CD4-positive, alpha-beta T cell (primary cell): ENCODE measurements at regions of chr15 and their contacts with region 1.

Region 1: DNA sequence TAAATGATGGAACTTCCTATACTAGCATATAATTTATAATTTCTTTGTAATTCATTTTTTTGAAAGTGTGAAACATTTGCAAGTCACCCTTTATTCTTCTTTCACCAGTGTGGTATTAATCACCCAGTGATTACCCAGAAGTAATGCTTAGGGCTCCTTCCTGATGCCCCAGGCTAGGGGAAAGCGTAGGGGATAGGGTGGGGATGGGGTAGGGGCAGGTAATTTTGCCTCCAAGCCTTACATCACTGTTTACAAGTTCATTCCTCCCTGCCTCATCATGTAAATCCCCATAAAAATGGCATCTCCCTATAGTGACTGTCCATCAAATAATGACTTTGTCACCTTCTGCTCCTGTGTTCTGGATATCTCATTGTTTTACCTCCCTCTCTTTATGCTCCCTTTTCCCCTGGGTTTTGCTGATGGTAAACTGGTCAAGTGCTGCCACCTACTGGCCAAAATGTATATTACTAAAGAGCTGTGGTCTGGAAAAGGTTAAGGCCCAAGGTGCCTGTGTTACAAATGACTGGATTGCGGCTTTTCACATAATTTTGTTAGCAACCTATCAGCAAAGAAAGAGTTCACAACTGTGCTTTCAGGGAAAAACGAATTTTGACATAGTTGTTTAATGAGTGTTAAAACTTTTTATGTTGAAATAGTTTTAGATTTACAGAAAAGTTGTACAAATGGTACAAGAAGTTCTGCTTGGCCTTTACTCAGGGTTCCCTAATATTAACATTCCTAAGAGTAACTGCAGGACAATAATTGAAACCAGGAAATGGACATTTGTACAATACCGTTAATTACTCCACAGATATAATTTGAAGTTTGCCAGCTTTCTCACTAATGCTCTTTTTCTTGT is 54.7 kb downstream of the ONECUT1 start:
- DNase-seq: peak; percentile 37 to 88 (median 58)
- ATAC-seq: peak; percentile 95
- H3K4me3 ChIP-seq: no peak overlapping the region
- H3K4me3 Mint-ChIP-seq: no peak overlapping the region
- H3K27ac ChIP-seq: no peak overlapping the region
- H3K27ac Mint-ChIP-seq: no peak overlapping the region
- H3K4me1 ChIP-seq: peaks cover 3% of the 10 kb centered on the region
- H3K4me1 Mint-ChIP-seq: peaks cover 2% of the 10 kb centered on the region
- H3K27me3 ChIP-seq: no peaks in the 10 kb centered on the region
- H3K27me3 Mint-ChIP-seq: peaks cover 4% of the 10 kb centered on the region
- CTCF ChIP-seq: peak; percentile 89

Region 2: DNA sequence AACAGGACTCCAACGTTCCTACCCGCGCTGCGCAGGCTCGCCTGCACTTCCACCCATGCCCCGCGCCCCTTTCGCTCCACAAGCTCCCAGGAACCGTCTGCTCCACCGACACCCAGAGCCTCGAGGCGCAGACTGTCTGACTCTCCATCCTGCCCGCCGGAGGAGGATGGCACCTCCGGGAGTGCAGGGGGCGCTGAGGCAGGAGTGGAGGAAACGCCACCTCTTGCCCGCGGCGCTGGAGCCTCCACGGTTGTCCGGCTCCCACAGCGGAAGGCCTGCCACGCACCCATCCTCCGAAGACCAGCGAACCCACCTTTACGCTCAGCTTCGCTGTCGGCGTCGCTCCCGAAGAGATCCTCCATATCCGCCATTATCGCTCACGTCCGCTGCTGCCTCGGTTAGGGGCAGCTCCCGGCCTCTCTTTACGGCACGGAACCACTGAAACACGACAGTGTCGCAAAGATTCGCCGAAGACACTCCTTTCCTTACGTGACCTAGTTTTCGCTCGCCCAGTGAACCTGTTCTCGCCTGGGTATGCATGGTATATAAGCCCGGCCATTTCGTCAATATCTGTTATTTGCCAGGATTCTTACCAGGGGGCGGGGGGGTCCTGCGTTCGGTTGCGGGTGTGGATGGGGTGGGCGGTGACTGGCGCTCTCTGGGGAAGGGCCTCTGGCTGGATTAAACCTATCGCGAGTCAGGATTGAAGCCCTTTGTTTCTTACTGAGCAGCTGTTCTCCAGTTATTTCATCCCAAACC is 763.9 kb before region 1 on chr15 and contains the start of gene LEO1:
- CTCF ChIA-PET with region 1: no interaction called
- POLR2A ChIA-PET with region 1: no interaction called
- intact Hi-C with region 1: loop called in 1 of 2 experiments (anchors 10 kb)
- DNase-seq: peak; percentile 73 to 97 (median 83)
- ATAC-seq: peak; percentile 92
- H3K4me3 ChIP-seq: peak within 1 kb of the TSS; percentile 98
- H3K4me3 Mint-ChIP-seq: peak within 1 kb of the TSS; percentile 95
- H3K27ac ChIP-seq: peak within 1 kb of the TSS; percentile 79 to 85
- H3K27ac Mint-ChIP-seq: peak within 1 kb of the TSS; percentile 92
- H3K4me1 ChIP-seq: peaks cover 19% of the 10 kb centered on the region
- H3K4me1 Mint-ChIP-seq: peaks cover 28% of the 10 kb centered on the region
- H3K27me3 ChIP-seq: no peaks in the 10 kb centered on the region
- H3K27me3 Mint-ChIP-seq: no peaks in the 10 kb centered on the region
- CTCF ChIP-seq: peak; percentile 47
- total RNA-seq, gene LEO1: 6.2 to 6.7 TPM

Region 3: DNA sequence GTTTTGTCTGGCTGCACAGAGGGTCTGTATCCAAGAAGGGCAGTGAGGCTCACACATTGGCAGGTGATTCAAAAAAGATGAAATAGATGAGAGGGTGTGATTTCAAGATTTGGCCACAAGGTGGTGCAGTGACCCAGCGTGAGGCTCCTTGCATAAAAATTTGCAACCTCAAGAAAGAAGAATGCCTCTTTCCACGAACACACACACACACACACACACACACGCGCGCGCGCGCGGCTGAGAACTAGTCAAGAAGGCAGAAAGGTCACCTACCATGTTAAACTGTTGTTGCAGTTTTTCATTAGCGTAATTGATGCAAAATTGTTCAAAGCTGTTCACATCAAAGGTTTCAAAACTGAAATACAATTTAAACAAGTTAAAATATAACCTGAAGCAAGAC is 479.1 kb before region 1 on chr15:
- CTCF ChIA-PET with region 1: no interaction called
- POLR2A ChIA-PET with region 1: interaction called, 3 read pairs
- intact Hi-C with region 1: loop called in 1 of 2 experiments (anchors 1 kb)
- DNase-seq: peak; percentile 58 to 90 (median 72)
- ATAC-seq: peak; percentile 96
- H3K4me3 ChIP-seq: no peak overlapping the region
- H3K4me3 Mint-ChIP-seq: peak overlapping the region; percentile 79
- H3K27ac ChIP-seq: no peak overlapping the region
- H3K27ac Mint-ChIP-seq: peak overlapping the region; percentile 34
- H3K4me1 ChIP-seq: peaks cover 14% of the 10 kb centered on the region
- H3K4me1 Mint-ChIP-seq: peaks cover 12% of the 10 kb centered on the region
- H3K27me3 ChIP-seq: no peaks in the 10 kb centered on the region
- H3K27me3 Mint-ChIP-seq: no peaks in the 10 kb centered on the region
- CTCF ChIP-seq: peak; percentile 76

Region 4: GRCh38 chr15:52609593-52609992 is 125.9 kb before region 1 on chr15:
- CTCF ChIA-PET with region 1: interaction called, 3 read pairs
- POLR2A ChIA-PET with region 1: no interaction called
- intact Hi-C with region 1: loop called in 1 of 2 experiments (anchors 10 kb)
- DNase-seq: no peak
- ATAC-seq: no peak
- H3K4me3 ChIP-seq: no peak overlapping the region
- H3K4me3 Mint-ChIP-seq: no peak overlapping the region
- H3K27ac ChIP-seq: no peak overlapping the region
- H3K27ac Mint-ChIP-seq: no peak overlapping the region
- H3K4me1 ChIP-seq: no peaks in the 10 kb centered on the region
- H3K4me1 Mint-ChIP-seq: no peaks in the 10 kb centered on the region
- H3K27me3 ChIP-seq: no peaks in the 10 kb centered on the region
- H3K27me3 Mint-ChIP-seq: no peaks in the 10 kb centered on the region
- CTCF ChIP-seq: no peak

Region 5: GRCh38 chr15:52626671-52627369 is 108.6 kb before region 1 on chr15:
- CTCF ChIA-PET with region 1: no interaction called
- POLR2A ChIA-PET with region 1: no interaction called
- intact Hi-C with region 1: loop called in 1 of 2 experiments (anchors 10 kb)
- DNase-seq: no peak
- ATAC-seq: no peak
- H3K4me3 ChIP-seq: no peak overlapping the region
- H3K4me3 Mint-ChIP-seq: no peak overlapping the region
- H3K27ac ChIP-seq: no peak overlapping the region
- H3K27ac Mint-ChIP-seq: no peak overlapping the region
- H3K4me1 ChIP-seq: no peaks in the 10 kb centered on the region
- H3K4me1 Mint-ChIP-seq: peaks cover 29% of the 10 kb centered on the region
- H3K27me3 ChIP-seq: no peaks in the 10 kb centered on the region
- H3K27me3 Mint-ChIP-seq: no peaks in the 10 kb centered on the region
- CTCF ChIP-seq: no peak

Region 6: DNA sequence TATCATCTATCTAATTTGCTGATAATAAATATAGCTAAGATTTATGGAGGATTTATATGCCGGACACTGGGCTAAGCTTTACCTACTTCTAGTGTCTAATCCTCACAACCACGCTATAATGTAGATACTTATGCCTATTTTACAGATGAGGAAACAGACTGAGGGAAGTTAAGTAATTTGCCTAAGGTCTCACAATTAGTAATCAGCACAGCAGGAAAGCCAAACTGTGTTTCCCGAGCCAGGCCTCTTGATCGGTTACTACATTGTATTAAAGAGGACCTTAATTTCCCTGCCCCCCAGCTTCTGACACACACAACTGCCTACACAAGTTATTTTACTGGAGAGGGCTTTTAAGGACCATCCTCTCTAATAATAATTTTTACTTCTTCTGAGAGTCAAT is 13.8 kb after region 1 on chr15:
- CTCF ChIA-PET with region 1: no interaction called
- POLR2A ChIA-PET with region 1: no interaction called
- intact Hi-C with region 1: no loop called
- DNase-seq: no peak
- ATAC-seq: no peak
- H3K4me3 ChIP-seq: no peak overlapping the region
- H3K4me3 Mint-ChIP-seq: no peak overlapping the region
- H3K27ac ChIP-seq: no peak overlapping the region
- H3K27ac Mint-ChIP-seq: no peak overlapping the region
- H3K4me1 ChIP-seq: no peaks in the 10 kb centered on the region
- H3K4me1 Mint-ChIP-seq: no peaks in the 10 kb centered on the region
- H3K27me3 ChIP-seq: peaks cover 8 to 21% of the 10 kb centered on the region in 2 experiments
- H3K27me3 Mint-ChIP-seq: peaks cover 59% of the 10 kb centered on the region
- CTCF ChIP-seq: no peak